H1 (cell line): ENCODE measurements at regions of chr3 and their contacts with region 1.

Region 1: GRCh38 chr3:180802837-180803236 is 109.6 kb upstream of the FXR1 start:
- DNase-seq: no peak
- H3K4me3 ChIP-seq: no peak overlapping the region
- H3K27ac ChIP-seq: no peak overlapping the region
- H3K4me1 ChIP-seq: no peaks in the 10 kb centered on the region
- H3K27me3 ChIP-seq: peaks cover 0 to 1% (median 0%) of the 10 kb centered on the region in 4 experiments; a peak in 1 of 7 replicates
- CTCF ChIP-seq: peak in 2 of 3 experiments; percentile 36 to 52; a peak in 3 of 4 replicates
- EP300 ChIP-seq: no peak
- POLR2A ChIP-seq: no peak
- RAD21 ChIP-seq: peak; percentile 75 to 79

Region 2: DNA sequence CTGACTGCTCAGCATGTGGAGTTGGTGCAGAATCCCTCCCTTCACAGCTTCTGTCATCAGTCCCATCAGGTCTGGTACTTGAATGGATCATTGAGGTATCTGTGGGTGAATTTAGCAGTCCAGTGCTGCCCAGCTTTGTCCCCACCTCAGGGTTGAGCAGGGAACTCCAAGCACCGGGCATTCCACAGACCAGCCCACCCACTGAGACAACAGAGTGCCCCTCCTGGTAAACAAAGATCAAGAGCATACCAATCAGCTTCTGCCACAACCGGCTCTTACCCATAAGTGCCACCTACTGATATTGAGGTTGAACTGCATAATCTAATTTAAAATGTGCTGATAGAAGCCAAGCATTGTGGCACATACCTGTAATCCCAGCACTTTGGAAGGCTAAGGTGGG is 52.5 kb after region 1 on chr3:
- CTCF ChIA-PET with region 1: interaction called, 19 read pairs
- POLR2A ChIA-PET with region 1: no interaction called
- DNase-seq: peak; percentile 43 to 67
- H3K4me3 ChIP-seq: no peak overlapping the region
- H3K27ac ChIP-seq: no peak overlapping the region
- H3K4me1 ChIP-seq: peaks cover 3 to 7% (median 4%) of the 10 kb centered on the region in 4 experiments
- H3K27me3 ChIP-seq: no peaks in the 10 kb centered on the region
- CTCF ChIP-seq: peak in 2 of 3 experiments; percentile 53 to 55; a peak in 3 of 4 replicates
- EP300 ChIP-seq: no peak
- POLR2A ChIP-seq: no peak
- RAD21 ChIP-seq: peak; percentile 57